Gastrocnemius medialis (tissue), 4 donors: ENCODE measurements at regions of chr12 and their contacts with region 1.

Region 1: DNA sequence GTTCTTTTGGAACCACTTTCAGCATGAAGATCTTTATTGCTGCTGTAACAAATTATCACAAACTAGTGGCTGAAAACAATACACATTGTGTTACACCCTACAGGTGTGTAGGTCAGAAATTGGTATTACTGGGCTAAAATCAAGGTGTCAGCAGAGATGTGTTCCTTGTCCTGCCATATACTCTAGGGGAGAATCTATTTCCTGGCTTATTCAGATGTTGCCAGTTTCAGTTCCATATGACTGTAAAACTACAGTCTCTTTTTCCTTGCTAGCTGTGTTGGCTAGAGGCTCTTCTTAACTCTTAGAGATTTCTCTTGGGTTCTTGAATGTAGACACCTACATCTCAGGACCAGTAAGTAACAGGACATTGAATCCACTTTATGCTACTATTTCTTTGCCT is 215.6 kb upstream of the PPFIA2 start:
- DNase-seq: no peak
- ATAC-seq: no peak
- H3K4me3 ChIP-seq: no peak overlapping the region
- H3K27ac ChIP-seq: no peak overlapping the region
- H3K4me1 ChIP-seq: no peaks in the 10 kb centered on the region
- H3K27me3 ChIP-seq: no peaks in the 10 kb centered on the region
- CTCF ChIP-seq: no peak
- POLR2A ChIP-seq: no peak

Region 2: GRCh38 chr12:81450920-81451739 is 523.6 kb before region 1 on chr12:
- in situ Hi-C with region 1: no loop called
- intact Hi-C with region 1: no loop called
- DNase-seq: no peak
- ATAC-seq: no peak
- H3K4me3 ChIP-seq: no peak overlapping the region
- H3K27ac ChIP-seq: no peak overlapping the region
- H3K4me1 ChIP-seq: no peaks in the 10 kb centered on the region
- H3K27me3 ChIP-seq: no peaks in the 10 kb centered on the region
- CTCF ChIP-seq: peak in 1 of 5 experiments; percentile 23
- POLR2A ChIP-seq: no peak

Region 3: DNA sequence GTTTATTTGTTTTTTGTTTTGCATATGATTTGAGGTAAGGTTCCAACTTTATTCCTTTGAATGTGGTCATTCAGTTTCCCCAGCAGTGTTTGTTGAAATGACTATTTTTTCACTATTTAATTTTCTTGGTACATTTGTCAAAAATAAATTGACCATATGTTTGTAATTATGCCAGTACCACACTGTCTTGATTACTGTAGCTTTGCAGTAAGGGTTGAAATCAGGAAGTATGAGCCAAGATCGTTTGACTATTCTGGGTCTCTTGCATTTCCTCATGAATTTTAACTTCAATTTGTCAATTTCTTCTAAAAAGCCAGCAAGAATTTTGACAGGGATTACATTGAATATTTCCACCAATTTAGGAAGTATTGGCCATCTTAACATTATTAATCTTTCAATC is 16.4 kb before region 1 on chr12:
- in situ Hi-C with region 1: no loop called
- intact Hi-C with region 1: loop called (anchors 1 kb)
- DNase-seq: no peak
- ATAC-seq: no peak
- H3K4me3 ChIP-seq: no peak overlapping the region
- H3K27ac ChIP-seq: no peak overlapping the region
- H3K4me1 ChIP-seq: no peaks in the 10 kb centered on the region
- H3K27me3 ChIP-seq: no peaks in the 10 kb centered on the region
- CTCF ChIP-seq: no peak
- POLR2A ChIP-seq: no peak

Region 4: DNA sequence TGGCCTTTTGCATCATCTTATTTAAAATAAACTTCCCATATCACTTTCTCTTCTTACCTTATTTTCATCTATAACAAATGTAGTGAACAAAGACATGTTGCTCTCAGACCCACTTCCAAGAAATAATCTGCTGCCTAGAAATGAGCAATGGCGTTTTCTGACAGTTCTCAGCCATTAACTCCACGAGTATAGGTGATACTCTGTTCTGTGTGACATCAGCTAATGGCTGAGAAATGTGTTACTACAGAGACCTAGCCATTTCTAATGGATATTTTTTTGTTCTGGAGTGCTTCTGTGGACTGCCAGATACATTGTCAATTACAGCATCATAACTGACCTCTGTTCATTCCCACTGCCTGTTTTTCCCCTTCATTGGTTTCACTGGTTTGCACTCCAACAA is 315.7 kb after region 1 on chr12:
- in situ Hi-C with region 1: no loop called
- intact Hi-C with region 1: no loop called
- DNase-seq: no peak
- ATAC-seq: no peak
- H3K4me3 ChIP-seq: no peak overlapping the region
- H3K27ac ChIP-seq: no peak overlapping the region
- H3K4me1 ChIP-seq: no peaks in the 10 kb centered on the region
- H3K27me3 ChIP-seq: no peaks in the 10 kb centered on the region
- CTCF ChIP-seq: no peak
- POLR2A ChIP-seq: no peak